ENCODE measurements at regions of chr17 and their contacts with region 1.

Region 1: GRCh38 chr17:28963841-28964240 is 12.5 kb upstream of the PHF12 start:
- DNase-seq: no peak
- ATAC-seq: no peak

Region 2: GRCh38 chr17:29116804-29117772 is 153.2 kb after region 1 on chr17:
- intact Hi-C with region 1: loop called (anchors 2 kb)
- DNase-seq: peak; percentile 88
- ATAC-seq: peak; percentile 62